ENCODE measurements at regions of chr11 and their contacts with region 1.

Region 1: GRCh38 chr11:83285771-83286528 is at the start of gene CCDC90B:
- DNase-seq: peak; percentile 91
- H3K4me3 Mint-ChIP-seq: peak within 1 kb of the TSS; percentile 89
- H3K27ac Mint-ChIP-seq: peak within 1 kb of the TSS; percentile 96
- H3K4me1 Mint-ChIP-seq: peaks cover 26% of the 10 kb centered on the region
- H3K27me3 Mint-ChIP-seq: peaks cover 3% of the 10 kb centered on the region
- total RNA-seq, gene CCDC90B: 25.4 and 27.2 TPM in 2 replicates

Region 2: DNA sequence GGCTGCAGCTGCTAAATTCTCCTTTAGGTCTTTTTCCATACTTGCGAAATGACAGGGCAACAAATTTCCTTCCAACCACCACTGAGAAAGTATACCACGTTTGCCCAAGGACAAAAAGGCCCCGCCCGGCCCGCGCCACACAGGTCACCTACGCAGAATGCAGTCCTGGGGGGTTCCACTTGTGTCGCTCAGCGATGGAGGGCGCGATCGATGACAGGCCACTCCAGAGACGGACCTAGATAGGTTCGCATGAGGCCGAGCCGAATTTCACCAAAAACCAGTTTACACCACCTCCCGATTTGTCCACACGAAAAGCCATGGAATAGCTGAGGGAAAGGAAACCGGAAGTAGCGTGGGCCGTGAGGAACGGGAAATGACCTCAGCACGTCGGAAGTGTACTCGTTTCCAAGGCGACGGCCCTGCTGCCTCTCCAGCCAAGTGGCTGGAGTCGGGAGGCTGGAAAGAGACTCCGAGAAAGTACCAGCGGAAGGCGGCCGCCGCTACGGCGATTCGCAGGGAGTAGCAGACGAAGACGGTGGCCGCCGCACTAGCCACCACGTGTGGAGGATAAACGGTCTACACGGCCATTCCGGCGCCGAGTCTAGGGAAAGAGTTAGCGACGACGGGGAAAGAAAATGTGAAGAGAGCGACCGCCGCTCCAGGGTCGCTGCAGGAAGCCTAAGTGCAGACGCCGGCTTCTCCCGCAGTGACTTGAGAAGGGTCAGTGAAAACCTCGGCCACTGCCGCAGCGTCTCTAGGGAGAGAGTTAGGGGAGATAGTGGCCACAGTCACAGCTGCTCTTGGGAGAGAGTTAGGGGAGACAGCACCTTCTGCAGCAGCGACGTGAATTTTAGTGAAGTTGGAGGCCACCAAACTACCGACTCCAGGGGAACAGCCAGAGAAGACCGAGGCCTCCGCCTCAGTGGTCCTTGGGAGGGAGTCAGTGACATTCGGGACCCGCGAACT is 92.4 kb before region 1 on chr11 and contains the start of gene ANKRD42:
- intact Hi-C with region 1: loop called (anchors 1 kb)
- DNase-seq: peak; percentile 82
- H3K4me3 Mint-ChIP-seq: peak within 1 kb of the TSS; percentile 99
- H3K27ac Mint-ChIP-seq: peak within 1 kb of the TSS; percentile 92
- H3K4me1 Mint-ChIP-seq: peaks cover 21% of the 10 kb centered on the region
- H3K27me3 Mint-ChIP-seq: no peaks in the 10 kb centered on the region
- total RNA-seq, gene ANKRD42: 3.7 TPM in 2 replicates